Heart left ventricle (tissue), 16 donors: ENCODE measurements at regions of chr9 and their contacts with region 1.

Region 1: GRCh38 chr9:38068866-38069629 is at the start of gene SHB:
- DNase-seq: peak; percentile 85 to 92 (median 89)
- ATAC-seq: peak; percentile 26 to 83 (median 69)
- H3K4me3 ChIP-seq: peak within 1 kb of the TSS; percentile 78 to 100 (median 94)
- H3K27ac ChIP-seq: peak within 1 kb of the TSS; percentile 91 to 100 (median 96)
- H3K4me1 ChIP-seq: peaks cover 0 to 54% (median 22%) of the 10 kb centered on the region in 12 donors
- H3K27me3 ChIP-seq: peaks cover 0 to 13% (median 0%) of the 10 kb centered on the region in 9 donors
- CTCF ChIP-seq: peak in 3 of 12 donors; percentile 4 to 67 (median 48)
- POLR2A ChIP-seq: peak in 1 of 2 donors; percentile 89
- total RNA-seq, gene SHB: 10.7 to 31.4 (median 21.4) TPM

Region 2: DNA sequence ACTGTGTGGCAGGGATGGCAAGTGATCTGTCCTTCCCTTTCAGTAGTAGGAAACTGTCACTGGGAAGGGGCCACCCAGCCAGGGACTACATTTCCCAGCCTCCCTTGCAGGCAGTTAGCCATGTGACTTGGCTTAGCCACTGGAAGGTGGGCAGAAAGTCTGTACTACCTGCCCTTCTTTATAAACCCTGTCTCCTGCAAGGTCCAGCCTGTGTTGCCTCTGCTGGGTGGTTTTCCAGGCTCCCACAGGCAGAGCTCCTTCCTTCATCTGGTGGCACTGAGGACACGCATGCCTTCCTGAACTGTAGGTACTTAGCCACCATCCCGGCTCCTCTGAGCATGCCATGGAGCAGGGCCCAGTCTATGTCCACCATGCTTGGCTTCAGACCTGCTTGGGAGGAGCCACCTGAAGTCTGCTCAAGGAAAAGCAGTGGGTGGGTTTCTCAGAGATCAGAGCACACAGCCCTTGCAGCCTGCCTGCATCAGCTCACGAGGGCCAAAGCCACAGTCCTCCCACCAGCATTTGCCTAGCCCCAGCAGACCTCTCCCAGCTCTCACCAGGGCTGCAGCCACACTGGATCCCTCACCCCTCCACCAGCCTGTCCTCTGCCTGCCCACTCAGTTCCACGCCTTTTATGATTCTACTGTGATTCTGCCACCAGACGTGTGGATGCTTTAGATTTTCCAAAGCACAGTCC is 148.4 kb before region 1 on chr9:
- intact Hi-C with region 1: loop called in 7 of 10 experiments (anchors 2 to 5 kb)
- DNase-seq: no peak
- ATAC-seq: no peak
- H3K4me3 ChIP-seq: no peak overlapping the region
- H3K27ac ChIP-seq: no peak overlapping the region
- H3K4me1 ChIP-seq: peaks cover 0 to 52% (median 26%) of the 10 kb centered on the region in 12 donors
- H3K27me3 ChIP-seq: no peaks in the 10 kb centered on the region
- CTCF ChIP-seq: no peak
- POLR2A ChIP-seq: no peak

Region 3: DNA sequence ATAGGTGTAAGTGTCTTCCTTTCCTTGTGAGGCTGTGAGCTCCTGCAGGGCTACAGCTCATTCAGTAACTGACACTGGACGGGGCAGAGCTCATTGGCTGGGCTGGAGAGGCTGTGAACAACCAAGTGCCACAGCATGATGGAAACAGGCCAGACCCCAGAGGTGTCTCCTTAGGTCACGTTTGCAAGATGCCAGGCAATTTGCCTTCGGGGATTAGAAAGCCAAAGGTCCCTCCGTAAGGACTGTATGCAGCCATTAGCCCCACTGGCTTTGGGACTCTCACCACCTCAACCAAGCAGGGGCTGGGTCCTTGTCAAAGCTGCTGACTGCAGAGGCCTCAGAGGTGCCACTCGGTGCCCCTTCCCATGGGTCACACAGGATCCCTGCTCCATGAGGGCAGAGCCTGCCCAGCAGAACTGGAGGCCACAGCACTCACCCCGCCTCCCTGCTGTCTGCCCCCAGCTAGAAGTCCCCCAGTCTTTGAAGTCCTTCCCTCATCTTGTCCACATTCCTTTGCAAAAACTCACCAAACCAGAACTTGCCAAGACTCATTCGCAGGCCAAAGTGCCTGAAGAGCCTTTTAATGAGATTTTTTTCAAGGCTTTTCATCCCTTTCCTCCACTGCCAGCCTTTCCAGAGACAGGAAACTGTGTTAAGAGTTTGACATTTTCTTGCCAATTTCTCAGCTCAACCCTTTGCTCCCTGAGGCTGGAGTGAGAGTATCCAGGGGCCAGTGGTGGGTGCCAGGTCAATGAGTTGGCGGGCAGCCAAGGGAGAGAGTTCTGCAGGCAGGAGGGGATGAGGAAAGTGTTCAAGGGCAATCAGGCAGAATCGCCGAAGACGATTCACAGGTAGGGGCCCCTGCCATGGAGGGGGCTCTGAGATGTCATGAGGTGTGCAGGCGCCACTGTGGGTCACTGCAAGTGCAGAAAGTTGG is 125.5 kb before region 1 on chr9:
- intact Hi-C with region 1: loop called in 3 of 10 experiments (anchors 5 kb)
- DNase-seq: peak in 3 of 5 donors; percentile 60 to 67 (median 63)
- ATAC-seq: peak; percentile 28 to 48 (median 42)
- H3K4me3 ChIP-seq: no peak overlapping the region
- H3K27ac ChIP-seq: peak overlapping the region in 5 of 12 donors; percentile 5 to 45 (median 30)
- H3K4me1 ChIP-seq: peaks cover 6 to 75% (median 45%) of the 10 kb centered on the region in 12 donors
- H3K27me3 ChIP-seq: no peaks in the 10 kb centered on the region
- CTCF ChIP-seq: no peak
- POLR2A ChIP-seq: no peak

Region 4: DNA sequence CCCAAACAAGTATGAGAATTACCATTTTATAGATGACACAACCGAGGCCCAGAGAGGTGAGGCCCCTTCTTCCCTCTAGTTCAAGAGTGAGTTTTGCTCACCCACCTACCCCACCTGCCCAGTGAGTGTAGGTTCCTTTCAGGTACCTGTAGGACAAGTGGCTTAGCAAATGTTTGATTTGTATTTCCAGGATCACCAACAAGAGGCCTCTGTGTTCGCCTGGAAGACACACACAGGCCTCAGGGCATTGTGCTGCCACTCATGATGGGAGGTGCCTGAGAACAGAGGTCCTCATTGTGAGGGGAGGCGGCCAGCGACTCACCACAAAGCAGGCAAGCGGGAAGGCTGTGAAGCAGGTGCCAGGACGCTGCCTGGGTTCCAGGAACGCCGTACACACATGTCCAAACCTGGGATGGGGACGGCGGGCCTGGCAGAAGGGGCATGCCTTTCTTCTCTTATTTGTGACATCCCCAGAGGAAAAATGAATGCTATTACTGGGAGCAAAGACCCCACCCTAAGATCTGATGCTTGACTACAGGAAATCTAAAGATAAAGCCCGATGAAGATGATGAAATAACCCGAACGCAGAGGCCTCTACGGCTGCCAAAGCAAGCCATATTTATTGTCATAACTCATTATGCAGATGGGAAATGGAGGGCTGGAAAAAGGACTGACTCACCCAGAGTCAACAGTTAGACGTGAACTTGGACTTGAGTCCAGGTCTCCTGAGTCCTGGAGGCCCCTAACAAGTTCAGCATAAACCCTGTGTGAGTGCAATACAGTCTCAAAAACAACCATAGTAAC is 104.9 kb before region 1 on chr9:
- intact Hi-C with region 1: no loop called
- DNase-seq: peak in 1 of 5 donors; percentile 55
- ATAC-seq: peak in 3 of 4 donors; percentile 40 to 69 (median 54)
- H3K4me3 ChIP-seq: no peak overlapping the region
- H3K27ac ChIP-seq: peak overlapping the region in 2 of 12 donors; percentile 41 to 46
- H3K4me1 ChIP-seq: peaks cover 0 to 41% (median 20%) of the 10 kb centered on the region in 12 donors
- H3K27me3 ChIP-seq: no peaks in the 10 kb centered on the region
- CTCF ChIP-seq: no peak
- POLR2A ChIP-seq: no peak

Region 5: GRCh38 chr9:37994639-37995347 is 74.3 kb before region 1 on chr9:
- intact Hi-C with region 1: loop called in 4 of 10 experiments (anchors 2 to 10 kb)
- DNase-seq: peak; percentile 84 to 92 (median 87)
- ATAC-seq: peak; percentile 90 to 91 (median 90)
- H3K4me3 ChIP-seq: peak overlapping the region in 6 of 12 donors; percentile 10 to 27 (median 17)
- H3K27ac ChIP-seq: peak overlapping the region in 11 of 12 donors; percentile 3 to 84 (median 52)
- H3K4me1 ChIP-seq: peaks cover 10 to 91% (median 75%) of the 10 kb centered on the region in 12 donors
- H3K27me3 ChIP-seq: no peaks in the 10 kb centered on the region
- CTCF ChIP-seq: no peak
- POLR2A ChIP-seq: no peak

Region 6: GRCh38 chr9:38026021-38026809 is 42.8 kb before region 1 on chr9:
- intact Hi-C with region 1: loop called in 3 of 10 experiments (anchors 5 kb)
- DNase-seq: peak in 4 of 5 donors; percentile 49 to 63 (median 56)
- ATAC-seq: peak; percentile 76 to 80 (median 76)
- H3K4me3 ChIP-seq: no peak overlapping the region
- H3K27ac ChIP-seq: peak overlapping the region; percentile 48 to 85 (median 78)
- H3K4me1 ChIP-seq: peaks cover 3 to 67% (median 50%) of the 10 kb centered on the region in 12 donors
- H3K27me3 ChIP-seq: no peaks in the 10 kb centered on the region
- CTCF ChIP-seq: no peak
- POLR2A ChIP-seq: no peak

Region 7: DNA sequence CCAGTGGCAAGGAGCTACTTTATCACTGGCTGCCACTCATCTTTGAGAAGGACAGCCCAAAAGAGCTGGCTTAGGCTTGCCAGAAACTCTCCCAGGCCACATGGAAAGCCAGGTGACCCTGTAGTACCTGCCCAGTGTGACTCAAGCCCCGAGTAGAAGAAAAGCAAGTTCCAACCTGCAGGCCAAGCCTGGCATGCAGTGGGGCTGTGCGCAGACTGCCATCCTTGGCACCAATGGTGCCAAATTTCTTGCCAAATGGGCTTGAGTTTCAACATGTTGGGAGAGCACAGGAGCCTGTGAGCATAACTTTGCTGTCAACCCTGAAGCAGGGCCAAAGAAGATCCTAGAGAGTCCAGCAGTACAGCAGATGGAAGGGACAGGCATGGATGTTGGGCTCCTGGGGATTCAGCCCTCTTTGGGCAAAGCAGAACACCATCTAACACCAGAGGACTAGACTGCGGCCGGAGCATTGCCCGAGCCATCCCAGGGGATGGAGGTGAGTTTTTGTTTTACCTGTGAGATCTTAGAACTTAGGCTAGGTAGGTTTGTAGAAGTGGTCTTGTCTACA is 27.3 kb after region 1 on chr9:
- intact Hi-C with region 1: no loop called
- DNase-seq: no peak
- ATAC-seq: no peak
- H3K4me3 ChIP-seq: no peak overlapping the region
- H3K27ac ChIP-seq: no peak overlapping the region
- H3K4me1 ChIP-seq: no peaks in the 10 kb centered on the region
- H3K27me3 ChIP-seq: no peaks in the 10 kb centered on the region
- CTCF ChIP-seq: no peak
- POLR2A ChIP-seq: no peak

Region 8: GRCh38 chr9:38107811-38108304 is 38.8 kb after region 1 on chr9:
- intact Hi-C with region 1: no loop called
- DNase-seq: no peak
- ATAC-seq: no peak
- H3K4me3 ChIP-seq: no peak overlapping the region
- H3K27ac ChIP-seq: no peak overlapping the region
- H3K4me1 ChIP-seq: peaks cover 0 to 6% (median 0%) of the 10 kb centered on the region in 12 donors
- H3K27me3 ChIP-seq: no peaks in the 10 kb centered on the region
- CTCF ChIP-seq: no peak
- POLR2A ChIP-seq: no peak

Region 9: DNA sequence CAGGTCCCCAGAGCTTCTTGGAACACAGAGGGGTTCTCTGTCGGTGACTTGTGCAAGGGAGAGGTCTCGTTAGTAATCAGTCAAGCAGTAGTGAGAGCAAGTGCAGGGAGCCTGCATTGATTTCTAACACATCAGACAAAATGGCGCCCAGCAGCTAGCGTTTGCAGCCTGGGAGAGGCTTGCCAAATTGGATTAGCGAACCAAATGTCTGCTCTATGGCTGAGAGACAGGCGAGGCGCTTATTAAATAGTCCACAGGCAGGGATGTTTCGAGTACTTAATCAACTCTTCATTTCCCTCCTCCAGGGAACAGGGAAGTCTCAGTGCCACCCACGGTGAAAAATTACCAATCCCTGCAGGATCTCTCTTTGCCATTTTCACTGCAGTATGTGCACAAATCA is 131.4 kb after region 1 on chr9:
- intact Hi-C with region 1: no loop called
- DNase-seq: no peak
- ATAC-seq: no peak
- H3K4me3 ChIP-seq: no peak overlapping the region
- H3K27ac ChIP-seq: no peak overlapping the region
- H3K4me1 ChIP-seq: peaks cover 0 to 4% (median 0%) of the 10 kb centered on the region in 12 donors
- H3K27me3 ChIP-seq: peaks cover 0 to 6% (median 0%) of the 10 kb centered on the region in 9 donors
- CTCF ChIP-seq: no peak
- POLR2A ChIP-seq: no peak